Activated B cell treated with CpG ODN at 0.5 μM for 24 hours (primary cell): ENCODE measurements at regions of chr3 and their contacts with region 1.

Region 1: GRCh38 chr3:141402476-141403171 is 34.3 kb downstream of the ZBTB38 start:
- DNase-seq: peak; percentile 63
- ATAC-seq: peak; percentile 67
- H3K4me3 Mint-ChIP-seq: peak overlapping the region; percentile 91
- H3K27ac Mint-ChIP-seq: peak overlapping the region; percentile 89
- H3K4me1 Mint-ChIP-seq: peaks cover 56% of the 10 kb centered on the region
- H3K27me3 Mint-ChIP-seq: no peaks in the 10 kb centered on the region
- CTCF ChIP-seq: no peak

Region 2: GRCh38 chr3:141279077-141279967 is 123.3 kb before region 1 on chr3:
- CTCF ChIA-PET with region 1: no interaction called
- POLR2A ChIA-PET with region 1: no interaction called
- intact Hi-C with region 1: no loop called
- DNase-seq: no peak
- ATAC-seq: no peak
- H3K4me3 Mint-ChIP-seq: no peak overlapping the region
- H3K27ac Mint-ChIP-seq: no peak overlapping the region
- H3K4me1 Mint-ChIP-seq: no peaks in the 10 kb centered on the region
- H3K27me3 Mint-ChIP-seq: no peaks in the 10 kb centered on the region
- CTCF ChIP-seq: no peak

Region 3: DNA sequence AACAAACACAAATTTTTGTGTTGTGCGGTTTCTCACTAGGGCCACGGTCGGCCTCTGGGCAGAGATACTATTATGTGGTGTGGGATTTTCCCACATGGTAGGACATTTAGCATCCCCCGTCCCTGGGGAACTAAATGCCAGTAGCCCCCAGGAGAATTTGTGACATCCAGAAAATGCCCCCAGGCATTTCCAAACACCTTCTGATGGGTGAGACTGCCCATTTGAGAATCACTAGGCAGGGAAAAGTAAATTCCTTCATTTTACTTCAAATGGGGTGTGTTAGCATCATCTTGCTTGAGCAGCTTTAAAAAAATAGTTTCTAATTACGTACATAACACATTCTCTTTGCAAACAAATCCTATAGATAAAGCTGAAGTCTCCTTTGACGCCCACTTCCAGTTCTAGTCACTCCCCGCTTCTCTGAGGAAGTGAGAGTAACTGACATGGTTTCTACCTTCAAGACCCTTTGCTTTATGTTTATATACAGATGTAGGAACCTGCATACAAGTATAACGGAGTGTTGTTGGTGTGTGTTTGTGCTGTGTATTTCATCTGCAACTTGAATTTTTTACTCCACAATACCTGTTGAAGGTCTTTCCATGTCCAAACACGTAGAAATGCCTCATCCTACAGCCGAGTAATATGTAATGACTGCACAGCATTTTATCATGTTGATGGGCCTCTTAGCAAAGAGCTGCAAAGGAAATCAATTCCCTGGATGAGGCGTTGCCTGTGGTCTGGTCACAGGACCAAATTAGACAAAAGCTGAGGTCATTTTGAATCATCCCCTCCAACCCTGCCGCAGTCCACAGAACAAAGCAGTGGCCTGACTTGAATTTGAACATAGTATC is 65.7 kb before region 1 on chr3:
- CTCF ChIA-PET with region 1: no interaction called
- POLR2A ChIA-PET with region 1: interaction called, 4 read pairs
- intact Hi-C with region 1: loop called (anchors 2 kb)
- DNase-seq: no peak
- ATAC-seq: peak; percentile 89
- H3K4me3 Mint-ChIP-seq: peak overlapping the region; percentile 51
- H3K27ac Mint-ChIP-seq: peak overlapping the region; percentile 73
- H3K4me1 Mint-ChIP-seq: peaks cover 26% of the 10 kb centered on the region
- H3K27me3 Mint-ChIP-seq: peaks cover 5% of the 10 kb centered on the region
- CTCF ChIP-seq: no peak

Region 4: DNA sequence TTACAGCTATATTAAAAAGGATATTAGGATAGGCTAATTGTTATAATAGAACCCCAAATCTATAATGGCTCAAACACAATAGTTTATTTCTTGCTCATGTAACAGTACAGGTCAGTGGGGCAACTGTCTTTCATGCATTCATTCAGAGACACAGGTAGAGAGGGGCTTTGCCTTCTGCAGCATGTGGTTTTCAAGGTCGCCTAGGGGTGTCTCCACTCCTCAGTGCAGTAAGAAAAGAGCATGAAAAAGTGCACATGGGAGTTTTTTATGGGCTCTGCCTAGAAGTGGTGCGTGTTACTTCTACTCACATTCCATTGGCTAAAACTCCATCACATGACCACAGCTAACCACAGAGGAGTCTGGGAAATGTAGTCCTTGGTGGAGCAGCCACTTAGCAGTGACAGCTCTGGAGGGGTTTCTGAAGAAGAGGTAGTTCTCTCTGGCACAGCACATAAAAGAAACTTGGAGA is 32.5 kb before region 1 on chr3:
- CTCF ChIA-PET with region 1: interaction called, 3 read pairs
- POLR2A ChIA-PET with region 1: interaction called, 8 read pairs
- intact Hi-C with region 1: loop called (anchors 1 kb)
- DNase-seq: no peak
- ATAC-seq: peak; percentile 99
- H3K4me3 Mint-ChIP-seq: no peak overlapping the region
- H3K27ac Mint-ChIP-seq: peak overlapping the region; percentile 15
- H3K4me1 Mint-ChIP-seq: peaks cover 13% of the 10 kb centered on the region
- H3K27me3 Mint-ChIP-seq: no peaks in the 10 kb centered on the region
- CTCF ChIP-seq: no peak

Region 5: GRCh38 chr3:141386611-141387111 is 16.0 kb before region 1 on chr3:
- CTCF ChIA-PET with region 1: interaction called, 4 read pairs
- POLR2A ChIA-PET with region 1: interaction called, 27 read pairs
- intact Hi-C with region 1: loop called (anchors 1 kb)
- DNase-seq: no peak
- ATAC-seq: peak; percentile 53
- H3K4me3 Mint-ChIP-seq: peak overlapping the region; percentile 83
- H3K27ac Mint-ChIP-seq: peak overlapping the region; percentile 85
- H3K4me1 Mint-ChIP-seq: peaks cover 41% of the 10 kb centered on the region
- H3K27me3 Mint-ChIP-seq: no peaks in the 10 kb centered on the region
- CTCF ChIP-seq: no peak